ENCODE measurements at regions of chr4 and their contacts with region 1.

Region 1: DNA sequence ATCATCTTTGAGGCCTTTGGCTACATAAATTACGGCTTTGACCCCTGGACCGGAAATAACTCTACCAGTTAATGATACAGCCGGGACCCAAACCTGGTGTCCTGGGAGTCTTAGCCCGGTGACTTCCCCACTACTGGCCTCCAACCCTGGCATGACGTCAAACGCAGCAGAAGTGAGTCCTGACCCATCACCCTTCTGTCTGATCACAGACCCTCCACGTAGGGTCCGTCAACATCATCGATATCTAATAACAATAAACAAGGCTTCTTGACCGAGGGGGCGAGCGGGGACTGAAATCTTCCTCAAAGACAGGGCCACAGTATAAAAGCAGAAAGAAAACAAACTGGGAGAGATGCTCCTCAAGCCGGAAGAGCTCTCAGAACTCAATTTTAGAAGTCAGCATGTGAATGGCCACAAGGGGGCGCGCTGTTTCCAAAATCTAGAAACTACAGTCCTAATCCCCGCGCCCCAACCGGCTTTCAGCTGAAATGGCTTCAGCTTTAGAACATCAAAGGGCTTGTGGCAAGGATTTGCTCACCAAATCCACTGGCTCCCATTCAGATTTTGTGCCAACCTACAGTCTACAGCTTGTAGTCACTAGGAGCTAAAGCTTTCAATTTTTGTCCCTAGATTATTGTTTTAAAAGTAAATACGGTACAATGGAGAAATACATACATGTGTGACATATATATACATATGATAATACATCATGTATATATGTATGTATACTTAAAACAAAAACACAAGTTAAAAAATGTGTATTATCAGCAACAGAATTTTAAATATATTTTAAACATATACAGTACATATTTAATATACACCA is 46.4 kb upstream of the ENPP6 start:
- DNase-seq: peak; percentile 83 to 97 (median 93)
- ATAC-seq: peak; percentile 57
- H3K4me3 ChIP-seq: no peak overlapping the region
- H3K4me3 Mint-ChIP-seq: no peak overlapping the region
- H3K27ac ChIP-seq: no peak overlapping the region
- H3K27ac Mint-ChIP-seq: no peak overlapping the region
- H3K4me1 ChIP-seq: peaks cover 7% of the 10 kb centered on the region
- H3K4me1 Mint-ChIP-seq: peaks cover 29% of the 10 kb centered on the region
- H3K27me3 ChIP-seq: no peaks in the 10 kb centered on the region
- H3K27me3 Mint-ChIP-seq: no peaks in the 10 kb centered on the region
- CTCF ChIP-seq: peak; percentile 73

Region 2: GRCh38 chr4:184282251-184282713 is 18.2 kb after region 1 on chr4:
- CTCF ChIA-PET with region 1: interaction called, 18 read pairs
- POLR2A ChIA-PET with region 1: interaction called, 11 read pairs
- intact Hi-C with region 1: no loop called
- DNase-seq: peak; percentile 26 to 73 (median 50)
- ATAC-seq: peak; percentile 89
- H3K4me3 ChIP-seq: no peak overlapping the region
- H3K4me3 Mint-ChIP-seq: peak overlapping the region; percentile 11
- H3K27ac ChIP-seq: peak overlapping the region in 1 of 2 experiments; percentile 56
- H3K27ac Mint-ChIP-seq: no peak overlapping the region
- H3K4me1 ChIP-seq: peaks cover 30% of the 10 kb centered on the region
- H3K4me1 Mint-ChIP-seq: peaks cover 33% of the 10 kb centered on the region
- H3K27me3 ChIP-seq: no peaks in the 10 kb centered on the region
- H3K27me3 Mint-ChIP-seq: no peaks in the 10 kb centered on the region
- CTCF ChIP-seq: peak; percentile 22

Region 3: DNA sequence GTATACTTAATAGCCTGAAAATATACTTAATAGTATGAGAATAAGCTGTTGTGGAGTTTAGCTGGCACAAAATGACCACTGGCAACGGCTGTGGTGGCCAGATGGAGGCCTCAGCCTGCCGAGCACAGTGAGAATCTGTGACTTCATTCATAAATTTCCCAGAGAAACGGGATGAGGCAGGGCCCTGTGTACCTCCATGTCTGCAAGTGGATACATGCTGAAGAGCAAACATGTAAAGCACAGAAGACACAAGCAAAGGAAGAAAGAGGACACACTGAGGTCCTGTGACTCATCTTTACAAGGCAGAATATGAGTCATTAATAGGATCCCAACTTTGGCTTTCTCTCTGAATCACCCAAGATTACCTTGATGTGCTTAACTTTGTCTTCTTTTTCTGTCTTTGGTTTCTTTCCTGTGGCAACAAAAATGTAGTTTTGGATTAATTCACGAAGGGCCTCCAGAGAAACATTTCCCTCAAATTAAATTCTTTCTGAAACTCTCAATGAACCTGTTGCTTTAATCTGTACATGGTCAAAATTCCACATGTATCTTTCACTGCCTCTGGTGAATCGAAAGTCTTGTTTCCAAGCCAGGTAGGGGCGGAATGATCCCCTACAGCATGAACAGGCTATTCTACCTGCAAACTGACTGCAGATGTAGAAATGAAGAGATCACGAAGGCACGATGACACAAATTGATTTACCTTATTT is 153.8 kb after region 1 on chr4:
- CTCF ChIA-PET with region 1: interaction called, 4 read pairs
- POLR2A ChIA-PET with region 1: no interaction called
- intact Hi-C with region 1: loop called (anchors 2 to 5 kb)
- DNase-seq: peak in 3 of 9 experiments; percentile 14 to 68 (median 53)
- ATAC-seq: peak; percentile 71
- H3K4me3 ChIP-seq: peak overlapping the region in 1 of 2 experiments; percentile 44
- H3K4me3 Mint-ChIP-seq: peak overlapping the region; percentile 73
- H3K27ac ChIP-seq: peak overlapping the region; percentile 61 to 80
- H3K27ac Mint-ChIP-seq: peak overlapping the region; percentile 98
- H3K4me1 ChIP-seq: peaks cover 33% of the 10 kb centered on the region
- H3K4me1 Mint-ChIP-seq: peaks cover 71% of the 10 kb centered on the region
- H3K27me3 ChIP-seq: no peaks in the 10 kb centered on the region
- H3K27me3 Mint-ChIP-seq: no peaks in the 10 kb centered on the region
- CTCF ChIP-seq: no peak

Region 4: GRCh38 chr4:184548648-184549341 is 284.7 kb after region 1 on chr4:
- CTCF ChIA-PET with region 1: no interaction called
- POLR2A ChIA-PET with region 1: no interaction called
- intact Hi-C with region 1: no loop called
- DNase-seq: no peak
- ATAC-seq: no peak
- H3K4me3 ChIP-seq: peak overlapping the region in 1 of 2 experiments; percentile 13
- H3K4me3 Mint-ChIP-seq: peak overlapping the region; percentile 55
- H3K27ac ChIP-seq: no peak overlapping the region
- H3K27ac Mint-ChIP-seq: no peak overlapping the region
- H3K4me1 ChIP-seq: no peaks in the 10 kb centered on the region
- H3K4me1 Mint-ChIP-seq: peaks cover 13% of the 10 kb centered on the region
- H3K27me3 ChIP-seq: peaks cover 0 to 2% of the 10 kb centered on the region in 2 experiments
- H3K27me3 Mint-ChIP-seq: no peaks in the 10 kb centered on the region
- CTCF ChIP-seq: no peak

Region 5: DNA sequence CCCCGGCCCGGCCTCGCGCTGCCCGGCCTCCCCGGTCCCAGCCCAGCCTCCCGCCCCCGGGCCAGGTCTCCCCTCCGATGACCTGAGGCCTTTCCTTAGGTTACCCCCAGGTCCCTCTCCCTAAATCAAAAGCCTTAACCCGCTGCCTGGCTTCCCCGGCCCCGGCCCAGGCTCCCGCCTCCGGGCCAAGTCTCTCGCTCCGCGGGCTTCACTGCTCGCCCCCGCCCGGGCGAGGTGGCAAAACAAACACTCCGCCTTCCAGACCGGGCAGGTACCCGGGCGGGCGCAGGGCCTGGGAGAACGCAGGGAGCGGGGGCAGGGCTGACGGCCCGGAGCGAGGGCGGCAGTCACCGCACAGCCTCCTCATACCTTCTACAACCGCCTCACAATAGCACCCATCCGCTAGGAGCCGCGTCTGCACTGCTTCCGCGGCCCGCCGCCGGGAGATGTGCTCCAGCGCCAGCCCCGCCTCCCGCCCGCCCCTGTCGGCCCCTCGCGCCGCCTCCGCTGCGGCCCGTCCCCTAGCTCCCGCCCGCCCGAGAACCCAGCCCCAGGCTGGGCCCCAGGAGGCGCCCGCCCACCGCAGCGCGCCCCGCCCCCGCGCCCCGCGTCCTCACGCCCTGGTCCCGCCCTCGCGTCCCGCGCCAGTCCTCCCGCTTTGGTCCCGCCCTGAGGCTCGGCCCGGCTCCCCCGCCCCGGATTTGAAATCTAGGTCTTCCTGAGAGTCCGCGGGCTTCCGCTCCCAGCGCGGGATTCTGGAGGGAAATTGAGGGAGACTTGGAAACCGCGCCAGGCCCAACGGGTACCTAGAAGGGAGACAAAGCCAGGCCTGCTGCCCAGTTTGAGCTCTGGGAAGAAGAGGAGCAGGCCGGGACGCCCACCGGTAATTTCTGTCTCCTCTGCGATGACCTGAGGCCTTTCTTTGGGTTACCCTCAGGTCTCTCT is 385.2 kb after region 1 on chr4 and contains the starts of genes CASP3 and PRIMPOL:
- CTCF ChIA-PET with region 1: interaction called, 6 read pairs
- POLR2A ChIA-PET with region 1: interaction called, 7 read pairs
- intact Hi-C with region 1: loop called (anchors 1 to 5 kb)
- DNase-seq: peak; percentile 93 to 98 (median 95)
- ATAC-seq: peak; percentile 90
- H3K4me3 ChIP-seq: peak within 1 kb of the TSS; percentile 95 to 98
- H3K4me3 Mint-ChIP-seq: peak within 1 kb of the TSS; percentile 94
- H3K27ac ChIP-seq: peak within 1 kb of the TSS; percentile 77 to 87
- H3K27ac Mint-ChIP-seq: peak within 1 kb of the TSS; percentile 96
- H3K4me1 ChIP-seq: peaks cover 43% of the 10 kb centered on the region
- H3K4me1 Mint-ChIP-seq: peaks cover 54% of the 10 kb centered on the region
- H3K27me3 ChIP-seq: no peaks in the 10 kb centered on the region
- H3K27me3 Mint-ChIP-seq: no peaks in the 10 kb centered on the region
- CTCF ChIP-seq: no peak
- total RNA-seq, gene CASP3: 14.4 to 15.7 TPM
- total RNA-seq, gene PRIMPOL: 6.0 to 7.3 TPM

Region 6: DNA sequence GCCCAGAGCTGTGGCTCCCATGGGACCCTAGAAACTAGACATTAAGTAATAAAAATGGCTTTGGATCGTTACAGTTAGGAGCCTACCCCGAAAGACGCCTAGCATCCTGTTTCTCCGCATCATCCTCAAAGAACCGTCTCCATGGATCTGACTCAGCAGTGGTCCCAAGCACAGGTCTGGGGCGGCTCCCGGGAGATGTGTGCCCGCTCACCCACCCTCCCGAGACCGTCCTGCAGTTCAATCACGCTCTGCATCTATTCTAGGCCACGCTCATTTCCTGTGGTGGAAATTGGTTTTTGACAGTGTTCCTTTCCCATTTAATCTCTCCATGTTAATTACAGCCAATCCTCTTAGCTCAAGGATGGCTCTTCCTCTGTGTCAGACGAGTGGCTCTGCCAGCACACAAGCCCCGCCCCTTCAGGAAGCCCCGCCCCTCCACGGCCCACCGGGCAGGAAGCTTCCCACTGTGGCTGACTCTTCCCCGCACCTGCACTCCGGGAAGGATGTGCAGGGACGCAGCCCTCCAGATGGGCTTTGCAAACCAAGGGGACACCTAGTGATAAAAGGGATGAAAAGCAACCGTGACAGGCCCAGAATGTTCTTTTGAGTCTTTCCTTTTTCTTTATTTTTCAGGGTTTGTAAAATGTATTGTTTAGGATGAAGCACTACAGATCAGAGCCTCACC is 719.7 kb after region 1 on chr4:
- CTCF ChIA-PET with region 1: no interaction called
- POLR2A ChIA-PET with region 1: no interaction called
- intact Hi-C with region 1: loop called in 1 of 2 experiments (anchors 1 kb)
- DNase-seq: peak; percentile 12 to 75 (median 55)
- ATAC-seq: peak; percentile 78
- H3K4me3 ChIP-seq: peak overlapping the region; percentile 27 to 40
- H3K4me3 Mint-ChIP-seq: no peak overlapping the region
- H3K27ac ChIP-seq: no peak overlapping the region
- H3K27ac Mint-ChIP-seq: no peak overlapping the region
- H3K4me1 ChIP-seq: peaks cover 19% of the 10 kb centered on the region
- H3K4me1 Mint-ChIP-seq: no peaks in the 10 kb centered on the region
- H3K27me3 ChIP-seq: no peaks in the 10 kb centered on the region
- H3K27me3 Mint-ChIP-seq: no peaks in the 10 kb centered on the region
- CTCF ChIP-seq: no peak

Region 7: DNA sequence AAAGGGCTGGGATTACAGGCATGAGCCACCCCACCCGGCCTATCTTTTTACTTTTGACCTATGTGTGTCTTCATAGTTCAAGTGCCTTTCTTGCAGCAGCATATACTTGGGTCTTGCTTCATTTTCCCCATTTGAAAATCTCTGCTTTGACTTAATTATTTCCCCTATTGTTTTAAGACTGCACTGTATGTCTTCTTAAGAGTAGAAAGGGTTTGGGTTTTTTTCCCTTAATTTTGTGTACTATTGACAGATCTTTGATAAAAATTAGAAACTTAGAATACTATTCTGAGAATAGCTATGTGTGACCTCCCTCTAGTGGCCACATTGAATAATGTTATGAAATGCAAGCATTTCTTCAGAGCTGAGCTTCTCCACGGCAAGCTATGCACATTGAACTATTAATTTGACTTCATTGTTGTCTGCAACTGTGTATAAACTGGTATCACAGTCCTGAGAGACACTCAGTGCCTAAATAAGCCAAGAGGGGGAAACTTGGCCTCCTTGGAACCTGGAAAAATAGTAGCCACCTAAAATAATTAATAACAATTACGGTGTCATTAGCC is 870.3 kb after region 1 on chr4:
- CTCF ChIA-PET with region 1: interaction called, 6 read pairs
- POLR2A ChIA-PET with region 1: no interaction called
- intact Hi-C with region 1: loop called (anchors 5 kb)
- DNase-seq: peak in 2 of 9 experiments; percentile 61 to 68
- ATAC-seq: peak; percentile 87
- H3K4me3 ChIP-seq: no peak overlapping the region
- H3K4me3 Mint-ChIP-seq: no peak overlapping the region
- H3K27ac ChIP-seq: no peak overlapping the region
- H3K27ac Mint-ChIP-seq: no peak overlapping the region
- H3K4me1 ChIP-seq: no peaks in the 10 kb centered on the region
- H3K4me1 Mint-ChIP-seq: no peaks in the 10 kb centered on the region
- H3K27me3 ChIP-seq: peaks cover 0 to 5% of the 10 kb centered on the region in 2 experiments
- H3K27me3 Mint-ChIP-seq: peaks cover 37% of the 10 kb centered on the region
- CTCF ChIP-seq: peak; percentile 86

Measured in CD8-positive, alpha-beta T cell (primary cell).